ENCODE measurements at regions of chr10 and their contacts with region 1.

Region 1: DNA sequence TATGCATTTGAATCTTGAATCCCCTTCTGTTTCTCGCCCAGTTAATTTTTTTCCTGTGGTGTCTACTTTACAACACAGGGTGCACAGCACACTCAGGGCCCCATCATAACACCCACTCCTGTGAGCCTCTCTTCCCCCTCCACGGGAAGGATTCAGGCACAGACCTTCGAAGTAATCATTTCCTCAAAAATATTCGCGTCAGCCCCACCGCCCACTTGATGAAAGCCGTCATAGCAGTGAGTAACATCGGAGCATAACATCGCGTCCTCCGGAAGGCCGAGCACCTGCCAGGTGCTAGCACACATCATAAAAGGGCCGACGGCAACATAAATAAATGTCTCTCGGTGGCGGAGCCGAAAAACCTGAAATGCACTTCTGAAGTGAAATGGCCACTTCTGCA is 201.7 kb upstream of the ADARB2 start:
- DNase-seq: peak; percentile 83
- H3K4me3 Mint-ChIP-seq: peak overlapping the region; percentile 72
- H3K27ac Mint-ChIP-seq: peak overlapping the region; percentile 96
- H3K4me1 Mint-ChIP-seq: peaks cover 25% of the 10 kb centered on the region
- H3K27me3 Mint-ChIP-seq: no peaks in the 10 kb centered on the region

Region 2: DNA sequence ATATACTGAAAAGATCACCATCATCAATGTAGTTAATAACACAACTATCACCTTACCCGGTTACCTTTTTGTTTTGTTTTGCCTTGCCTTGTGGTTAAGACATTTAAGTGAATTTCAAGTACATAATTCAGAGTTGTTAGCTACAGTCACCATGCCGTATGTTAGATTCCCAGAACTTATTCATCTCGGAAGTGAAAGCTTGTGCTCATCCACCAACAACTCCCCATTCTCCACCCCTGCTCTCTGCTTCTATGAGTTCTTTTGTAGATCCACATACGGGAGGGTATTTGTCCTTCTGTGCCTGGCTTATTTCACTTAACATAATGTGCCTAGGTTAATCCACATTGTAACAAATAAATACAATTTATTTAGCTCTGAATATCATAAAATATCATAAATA is 18.9 kb before region 1 on chr10:
- intact Hi-C with region 1: loop called (anchors 1 kb)
- DNase-seq: peak; percentile 59
- H3K4me3 Mint-ChIP-seq: no peak overlapping the region
- H3K27ac Mint-ChIP-seq: no peak overlapping the region
- H3K4me1 Mint-ChIP-seq: peaks cover 5% of the 10 kb centered on the region
- H3K27me3 Mint-ChIP-seq: peaks cover 15% of the 10 kb centered on the region

Measured in activated CD4-positive, alpha-beta T cell treated with anti-CD3 and anti-CD28 coated beads, Interleukin-2, amount 10 ng/mL, durations not matched to agents 24 days and 14 days (primary cell).